Activated CD4-positive, alpha-beta T cell treated with anti-CD3 and anti-CD28 coated beads, Interleukin-2, amount 10 ng/mL, durations not matched to agents 24 days and 14 days (primary cell): ENCODE measurements at regions of chr11 and their contacts with region 1.

Region 1: GRCh38 chr11:95790123-95790932 is at the start of gene CEP57:
- DNase-seq: peak; percentile 98
- H3K4me3 Mint-ChIP-seq: peak within 1 kb of the TSS; percentile 98
- H3K27ac Mint-ChIP-seq: peak within 1 kb of the TSS; percentile 100
- H3K4me1 Mint-ChIP-seq: peaks cover 45% of the 10 kb centered on the region
- H3K27me3 Mint-ChIP-seq: no peaks in the 10 kb centered on the region
- total RNA-seq, gene CEP57: 75.7 and 87.6 TPM in 2 replicates

Region 2: DNA sequence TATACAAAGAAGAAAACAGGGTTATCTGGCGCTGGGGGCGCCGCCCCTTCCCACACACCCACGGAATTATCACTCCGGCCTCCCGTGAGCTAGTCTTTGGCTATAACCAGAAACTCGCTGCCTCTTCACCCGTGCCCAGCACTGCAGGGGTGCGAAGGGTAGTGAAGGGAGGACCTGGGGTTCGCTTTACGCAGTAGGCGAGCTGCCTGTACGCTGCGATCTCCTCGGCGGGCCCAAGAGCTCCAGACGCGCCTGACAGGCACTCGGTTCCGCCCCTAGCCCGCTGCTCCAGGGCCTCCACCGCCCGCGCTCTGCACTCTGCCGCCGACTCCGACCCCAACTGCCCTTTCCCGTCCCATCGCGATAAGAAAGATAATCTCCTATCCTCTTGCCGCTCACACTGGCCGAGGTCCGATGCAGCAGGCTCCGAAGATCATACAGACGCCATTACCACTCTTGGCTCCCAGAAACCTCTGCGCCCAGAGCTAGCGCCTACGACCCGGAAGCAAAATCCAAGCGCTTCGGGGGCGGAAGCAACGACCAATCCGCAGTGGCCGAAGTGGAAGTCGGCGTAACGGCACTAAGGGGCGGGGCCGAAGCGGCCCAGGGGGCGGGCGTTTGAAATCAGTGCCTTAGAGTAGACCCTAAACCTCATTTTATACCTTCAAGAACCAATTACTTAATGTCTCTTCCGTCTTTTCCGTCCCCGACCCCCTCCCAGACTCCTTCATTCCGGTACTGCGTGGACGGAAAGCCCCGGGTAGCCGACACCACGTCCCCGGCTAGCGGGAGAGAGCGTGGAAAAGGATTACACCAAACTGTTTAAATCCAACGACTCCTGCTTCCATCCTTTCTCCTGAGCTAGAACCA is 817.0 kb before region 1 on chr11 and contains the starts of genes CWC15 and KDM4D:
- intact Hi-C with region 1: loop called (anchors 1 kb)
- DNase-seq: peak; percentile 98
- H3K4me3 Mint-ChIP-seq: peak within 1 kb of the TSS; percentile 94
- H3K27ac Mint-ChIP-seq: peak within 1 kb of the TSS; percentile 93
- H3K4me1 Mint-ChIP-seq: peaks cover 33% of the 10 kb centered on the region
- H3K27me3 Mint-ChIP-seq: no peaks in the 10 kb centered on the region
- total RNA-seq, gene CWC15: 87.6 and 96.2 TPM in 2 replicates
- total RNA-seq, gene KDM4D: 1.2 TPM in 2 replicates

Region 3: DNA sequence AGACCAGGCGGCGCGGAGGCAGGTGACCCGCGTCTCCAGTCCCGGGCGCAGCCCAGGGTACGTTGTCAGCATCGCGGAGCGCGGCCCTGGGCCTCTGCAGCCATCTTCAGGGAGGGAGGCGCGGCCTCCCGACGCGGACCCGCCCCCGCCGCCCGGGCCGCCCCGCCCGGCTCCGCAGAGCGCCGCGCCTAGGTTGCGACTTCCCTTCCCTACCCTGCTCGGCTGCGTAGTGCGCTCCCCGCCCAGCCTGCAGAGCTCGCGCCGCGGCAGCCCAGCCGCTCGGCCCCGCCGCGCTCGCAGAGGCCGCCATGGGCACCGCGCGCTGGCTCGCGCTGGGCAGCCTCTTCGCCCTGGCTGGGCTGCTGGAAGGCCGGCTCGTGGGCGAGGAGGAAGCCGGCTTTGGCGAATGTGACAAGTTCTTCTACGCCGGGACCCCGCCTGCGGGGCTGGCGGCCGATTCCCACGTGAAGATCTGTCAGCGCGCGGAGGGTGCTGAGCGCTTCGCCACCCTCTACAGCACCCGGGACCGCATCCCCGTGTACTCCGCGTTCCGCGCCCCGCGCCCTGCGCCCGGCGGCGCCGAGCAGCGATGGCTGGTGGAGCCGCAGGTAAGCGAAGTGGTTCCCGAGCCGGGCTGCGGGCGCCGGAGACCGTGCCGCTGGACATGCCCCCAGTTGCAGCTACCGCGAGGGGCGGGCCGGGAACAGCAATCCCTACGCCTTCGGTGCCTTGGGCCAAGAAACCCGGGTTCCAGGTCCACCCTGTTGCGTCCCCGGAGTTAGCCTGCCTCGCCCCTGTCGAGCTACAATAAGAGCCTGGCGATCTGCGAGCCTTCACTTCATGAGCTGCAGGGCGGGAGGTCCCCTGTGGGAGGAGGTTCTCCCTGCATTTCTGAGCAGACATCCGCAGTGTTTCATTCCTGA is 700.4 kb before region 1 on chr11 and contains the start of gene ENDOD1:
- intact Hi-C with region 1: loop called (anchors 2 kb)
- DNase-seq: peak; percentile 96
- H3K4me3 Mint-ChIP-seq: peak within 1 kb of the TSS; percentile 91
- H3K27ac Mint-ChIP-seq: peak within 1 kb of the TSS; percentile 98
- H3K4me1 Mint-ChIP-seq: peaks cover 67% of the 10 kb centered on the region
- H3K27me3 Mint-ChIP-seq: no peaks in the 10 kb centered on the region
- total RNA-seq, gene ENDOD1: 34.1 and 34.3 TPM in 2 replicates

Region 4: DNA sequence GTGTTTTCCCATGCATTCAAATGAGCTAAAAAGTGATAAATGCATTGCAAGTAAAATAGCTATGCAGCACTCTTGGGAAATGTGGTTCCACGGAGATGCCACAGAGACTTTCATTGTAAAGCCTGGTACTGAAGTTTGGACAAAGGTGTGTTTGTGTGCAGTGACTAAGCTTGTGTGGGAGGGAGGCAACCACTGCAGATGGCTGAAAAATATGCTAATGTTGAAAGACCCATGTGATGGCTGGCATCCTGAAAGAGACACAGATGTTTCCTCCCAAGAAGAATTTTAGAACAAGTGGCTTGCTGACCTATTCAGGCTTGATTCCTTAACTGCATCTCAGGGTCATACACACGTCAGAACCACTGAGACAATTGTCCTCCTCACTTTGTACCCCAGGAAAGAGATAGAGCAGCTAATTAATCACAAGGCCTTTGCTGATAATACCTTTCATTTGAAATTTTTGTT is 74.5 kb before region 1 on chr11:
- intact Hi-C with region 1: loop called (anchors 1 kb)
- DNase-seq: peak; percentile 73
- H3K4me3 Mint-ChIP-seq: peak overlapping the region; percentile 57
- H3K27ac Mint-ChIP-seq: peak overlapping the region; percentile 84
- H3K4me1 Mint-ChIP-seq: peaks cover 45% of the 10 kb centered on the region
- H3K27me3 Mint-ChIP-seq: no peaks in the 10 kb centered on the region

Region 5: GRCh38 chr11:95778699-95779098 is 11.6 kb before region 1 on chr11:
- intact Hi-C with region 1: no loop called
- DNase-seq: no peak
- H3K4me3 Mint-ChIP-seq: no peak overlapping the region
- H3K27ac Mint-ChIP-seq: no peak overlapping the region
- H3K4me1 Mint-ChIP-seq: peaks cover 32% of the 10 kb centered on the region
- H3K27me3 Mint-ChIP-seq: no peaks in the 10 kb centered on the region

Region 6: DNA sequence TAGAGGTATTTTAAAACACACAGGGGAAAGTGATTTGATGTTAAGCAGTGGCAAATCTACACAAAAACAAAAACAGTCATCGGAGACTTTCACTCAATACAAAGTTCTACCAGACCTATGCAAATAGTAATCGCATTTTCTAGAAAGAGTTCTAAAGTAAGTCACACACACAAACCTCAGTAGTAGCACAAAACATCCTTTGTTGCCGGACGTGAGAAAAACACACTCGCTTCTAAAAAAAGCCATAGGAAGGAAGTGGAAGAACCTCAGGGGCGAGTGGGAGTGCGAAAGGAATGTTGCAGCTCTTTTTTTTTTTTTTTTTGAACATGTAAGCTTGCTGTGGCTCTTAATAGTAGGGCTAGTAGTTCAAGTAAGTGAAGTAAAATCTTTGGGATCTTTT is 463.8 kb after region 1 on chr11:
- intact Hi-C with region 1: loop called (anchors 2 kb)
- DNase-seq: peak; percentile 83
- H3K4me3 Mint-ChIP-seq: peak overlapping the region; percentile 79
- H3K27ac Mint-ChIP-seq: peak overlapping the region; percentile 84
- H3K4me1 Mint-ChIP-seq: peaks cover 73% of the 10 kb centered on the region
- H3K27me3 Mint-ChIP-seq: no peaks in the 10 kb centered on the region